PC-9 (cell line): ENCODE measurements at regions of chr17 and their contacts with region 1.

Region 1: DNA sequence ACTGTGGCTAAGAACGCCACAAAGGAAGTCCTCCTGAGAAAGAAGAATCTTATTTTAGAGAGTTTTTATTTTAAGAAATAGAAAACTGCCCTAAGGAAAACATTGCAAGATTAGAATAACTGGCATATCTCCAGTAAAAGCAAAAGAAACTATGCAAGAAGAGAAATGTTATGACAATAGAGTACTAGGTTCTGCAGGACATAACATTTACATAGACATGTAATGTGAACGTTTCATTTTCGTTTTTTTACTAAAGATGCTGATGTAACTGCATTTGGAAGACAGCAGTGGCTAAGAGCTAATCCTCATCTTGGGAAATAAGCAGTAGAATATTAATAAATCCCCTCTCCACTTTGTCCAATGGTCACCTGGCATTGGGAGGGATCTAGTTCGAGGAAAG is 7.8 kb upstream of the ASGR2 start:
- DNase-seq: no peak
- H3K4me3 ChIP-seq: no peak overlapping the region
- H3K27ac ChIP-seq: no peak overlapping the region
- H3K4me1 ChIP-seq: no peaks in the 10 kb centered on the region
- H3K27me3 ChIP-seq: no peaks in the 10 kb centered on the region
- CTCF ChIP-seq: no peak

Region 2: DNA sequence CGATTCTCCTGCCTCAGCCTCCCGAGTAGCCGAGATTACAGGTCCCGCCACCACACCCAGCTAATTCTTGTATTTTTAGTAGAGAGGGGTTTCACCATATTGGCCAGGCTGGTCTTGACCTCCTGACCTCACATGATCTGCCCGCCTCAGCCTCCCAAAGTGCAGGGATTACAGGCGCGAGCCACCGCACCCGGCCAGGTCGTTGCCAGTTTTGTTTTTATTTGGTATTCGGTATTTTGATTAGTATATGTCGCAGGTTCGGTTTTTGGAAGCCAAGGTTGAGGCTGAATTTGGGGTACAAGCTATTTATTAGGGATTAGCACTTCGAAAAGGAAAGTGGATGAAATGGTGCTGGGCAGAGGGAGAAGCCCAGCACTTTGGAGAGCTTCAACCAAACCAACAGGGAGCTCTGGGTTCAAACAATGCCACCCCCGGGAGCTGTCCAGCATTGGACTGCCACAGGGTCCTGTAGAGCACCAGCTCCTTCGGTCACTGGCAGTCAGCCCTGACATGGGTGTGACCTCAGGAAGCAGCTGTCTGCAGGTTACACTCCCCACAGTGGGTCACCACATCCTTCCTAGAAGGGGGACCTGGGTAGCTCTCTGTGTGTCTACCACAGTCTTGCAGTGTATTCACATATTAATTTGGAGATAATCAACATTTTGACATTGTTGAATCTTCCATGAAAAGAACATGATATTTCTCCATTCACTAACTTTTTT is 40.9 kb before region 1 on chr17:
- CTCF ChIA-PET with region 1: no interaction called
- POLR2A ChIA-PET with region 1: interaction called, 14 read pairs
- intact Hi-C with region 1: no loop called
- DNase-seq: no peak
- H3K4me3 ChIP-seq: no peak overlapping the region
- H3K27ac ChIP-seq: no peak overlapping the region
- H3K4me1 ChIP-seq: no peaks in the 10 kb centered on the region
- H3K27me3 ChIP-seq: peaks cover 54% of the 10 kb centered on the region
- CTCF ChIP-seq: no peak

Region 3: GRCh38 chr17:7136266-7136877 is 14.0 kb after region 1 on chr17:
- CTCF ChIA-PET with region 1: no interaction called
- POLR2A ChIA-PET with region 1: no interaction called
- intact Hi-C with region 1: no loop called
- DNase-seq: peak; percentile 42 to 70
- H3K4me3 ChIP-seq: peak overlapping the region; percentile 50
- H3K27ac ChIP-seq: no peak overlapping the region
- H3K4me1 ChIP-seq: peaks cover 16% of the 10 kb centered on the region
- H3K27me3 ChIP-seq: no peaks in the 10 kb centered on the region
- CTCF ChIP-seq: peak; percentile 98

Region 4: DNA sequence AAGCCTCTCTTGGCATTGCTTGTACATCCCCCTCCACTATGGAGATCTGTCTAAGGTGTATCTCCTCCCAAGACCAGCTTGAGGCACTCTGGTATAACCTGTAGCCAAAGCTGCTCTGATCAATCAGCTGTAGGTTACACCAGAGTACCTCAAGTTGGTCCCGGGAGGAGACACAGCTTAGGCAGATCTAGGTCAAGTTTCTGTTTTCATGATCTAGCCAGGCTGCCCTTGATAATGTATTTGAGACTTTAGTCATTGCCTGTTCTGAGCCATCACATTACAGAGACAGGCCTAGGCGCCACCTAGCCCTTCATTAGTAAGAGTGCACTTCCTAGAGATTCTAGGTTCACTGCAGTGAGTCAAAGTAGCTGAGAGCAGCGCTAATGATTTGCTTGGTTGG is 25.4 kb after region 1 on chr17:
- CTCF ChIA-PET with region 1: no interaction called
- POLR2A ChIA-PET with region 1: no interaction called
- intact Hi-C with region 1: no loop called
- DNase-seq: no peak
- H3K4me3 ChIP-seq: no peak overlapping the region
- H3K27ac ChIP-seq: no peak overlapping the region
- H3K4me1 ChIP-seq: peaks cover 3% of the 10 kb centered on the region
- H3K27me3 ChIP-seq: no peaks in the 10 kb centered on the region
- CTCF ChIP-seq: no peak